ENCODE measurements at regions of chr2 and their contacts with region 1.

Region 1: GRCh38 chr2:102235491-102235890 is 48.7 kb downstream of the IL1RL2 start:
- DNase-seq: peak in 1 of 2 donors; percentile 46
- ATAC-seq: peak; percentile 30 to 62 (median 59)
- H3K4me3 ChIP-seq: no peak overlapping the region
- H3K4me3 Mint-ChIP-seq: no peak overlapping the region
- H3K27ac ChIP-seq: no peak overlapping the region
- H3K27ac Mint-ChIP-seq: no peak overlapping the region
- H3K4me1 ChIP-seq: peaks cover 23% of the 10 kb centered on the region
- H3K4me1 Mint-ChIP-seq: peaks cover 19 to 30% of the 10 kb centered on the region in 2 donors
- H3K27me3 ChIP-seq: peaks cover 11% of the 10 kb centered on the region
- H3K27me3 Mint-ChIP-seq: peaks cover 59 to 75% of the 10 kb centered on the region in 2 donors
- CTCF ChIP-seq: no peak

Region 2: GRCh38 chr2:102366406-102367112 is 131.1 kb after region 1 on chr2:
- intact Hi-C with region 1: loop called (anchors 1 kb)
- DNase-seq: peak in 1 of 2 donors; percentile 60
- ATAC-seq: peak; percentile 25 to 53 (median 45)
- H3K4me3 ChIP-seq: peak overlapping the region; percentile 26
- H3K4me3 Mint-ChIP-seq: peak overlapping the region; percentile 88
- H3K27ac ChIP-seq: peak overlapping the region; percentile 80
- H3K27ac Mint-ChIP-seq: peak overlapping the region; percentile 90 to 95
- H3K4me1 ChIP-seq: peaks cover 35% of the 10 kb centered on the region
- H3K4me1 Mint-ChIP-seq: peaks cover 87% of the 10 kb centered on the region in 2 donors
- H3K27me3 ChIP-seq: no peaks in the 10 kb centered on the region
- H3K27me3 Mint-ChIP-seq: no peaks in the 10 kb centered on the region
- CTCF ChIP-seq: no peak

Measured in natural killer cell (primary cell).